GM18951 (cell line): ENCODE measurements at regions of chrX and their contacts with region 1.

Region 1: GRCh38 chrX:153494541-153495361 is at the start of gene BGN:
- POLR2A ChIP-seq: no peak

Region 2: DNA sequence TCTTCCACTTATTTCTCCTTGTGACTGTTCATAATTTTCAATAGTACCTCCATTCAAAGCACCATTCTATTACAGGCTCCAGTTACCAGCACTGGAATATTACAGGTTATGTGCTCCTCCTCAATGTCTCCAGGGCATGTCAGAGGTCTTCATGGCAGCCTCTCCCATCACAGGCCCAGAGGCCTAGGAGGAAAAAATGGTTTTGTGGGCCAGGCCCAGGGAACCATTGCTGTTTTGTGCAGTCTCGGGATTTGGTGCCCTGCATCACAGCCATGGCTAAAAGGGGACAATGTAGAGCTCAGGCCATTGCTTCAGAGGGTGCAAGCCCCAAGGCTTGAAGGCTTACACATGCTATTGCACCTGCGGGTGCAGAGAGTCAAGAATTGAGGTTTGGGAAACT is 445.7 kb before region 1 on chrX:
- in situ Hi-C with region 1: loop called (anchors 10 kb)
- POLR2A ChIP-seq: no peak